ENCODE measurements at regions of chr21 and their contacts with region 1.

Region 1: GRCh38 chr21:39125752-39126485 is 57.3 kb downstream of the PSMG1 start:
- DNase-seq: peak; percentile 42 to 78 (median 55)
- H3K4me3 ChIP-seq: no peak overlapping the region
- H3K27ac ChIP-seq: peak overlapping the region in 1 of 5 donors; percentile 7
- H3K4me1 ChIP-seq: no peaks in the 10 kb centered on the region
- H3K27me3 ChIP-seq: no peaks in the 10 kb centered on the region
- CTCF ChIP-seq: peak in 5 of 6 experiments; percentile 13 to 75 (median 63)
- POLR2A ChIP-seq: no peak

Region 2: GRCh38 chr21:38733973-38734546 is 391.9 kb before region 1 on chr21:
- intact Hi-C with region 1: loop called in 1 of 2 experiments (anchors 10 kb)
- DNase-seq: peak; percentile 79 to 96 (median 87)
- H3K4me3 ChIP-seq: peak overlapping the region in 1 of 4 donors; percentile 35
- H3K27ac ChIP-seq: peak overlapping the region in 4 of 5 donors; percentile 29 to 86 (median 62)
- H3K4me1 ChIP-seq: peaks cover 0 to 6% of the 10 kb centered on the region in 2 donors
- H3K27me3 ChIP-seq: no peaks in the 10 kb centered on the region
- CTCF ChIP-seq: peak; percentile 85 to 96 (median 94)
- POLR2A ChIP-seq: no peak